GM12878 (cell line): ENCODE measurements at regions of chr4 and their contacts with region 1.

Region 1: DNA sequence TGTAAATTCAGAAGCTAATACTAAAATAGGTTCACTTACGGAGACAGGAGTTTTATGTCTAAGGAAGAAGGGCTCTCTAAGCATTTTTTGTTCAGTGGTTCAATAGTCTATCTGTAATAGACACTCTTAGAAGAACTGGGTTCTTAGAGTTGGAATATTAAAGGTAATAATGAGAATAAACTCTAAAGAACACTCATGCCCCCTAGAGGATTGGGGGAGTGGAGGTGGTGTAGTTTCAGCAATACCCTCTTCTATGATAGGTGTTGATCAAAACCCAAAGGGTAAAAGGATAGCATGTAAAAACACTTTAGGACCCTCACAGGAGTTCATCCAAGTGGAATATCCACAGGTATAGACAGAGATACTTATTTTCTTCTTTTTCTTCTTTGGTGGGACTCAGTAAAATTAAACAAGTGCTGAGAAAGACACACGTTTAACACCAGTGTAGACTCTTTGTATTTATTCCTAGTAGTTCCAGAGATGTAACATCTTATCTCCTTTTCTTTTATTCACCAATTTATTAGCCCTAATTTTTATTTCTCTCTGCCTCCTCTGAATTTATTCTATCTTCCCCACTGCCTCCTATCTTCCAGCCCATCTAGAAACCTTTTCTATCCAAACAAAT is 25.7 kb upstream of the MND1 start:
- DNase-seq: no peak
- ATAC-seq: peak; percentile 88
- H3K4me3 ChIP-seq: no peak overlapping the region
- H3K27ac ChIP-seq: no peak overlapping the region
- H3K4me1 ChIP-seq: no peaks in the 10 kb centered on the region
- H3K27me3 ChIP-seq: no peaks in the 10 kb centered on the region
- CTCF ChIP-seq: peak; percentile 62 to 68 (median 66)
- EP300 ChIP-seq: no peak
- POLR2A ChIP-seq: no peak
- RAD21 ChIP-seq: peak; percentile 78

Region 2: DNA sequence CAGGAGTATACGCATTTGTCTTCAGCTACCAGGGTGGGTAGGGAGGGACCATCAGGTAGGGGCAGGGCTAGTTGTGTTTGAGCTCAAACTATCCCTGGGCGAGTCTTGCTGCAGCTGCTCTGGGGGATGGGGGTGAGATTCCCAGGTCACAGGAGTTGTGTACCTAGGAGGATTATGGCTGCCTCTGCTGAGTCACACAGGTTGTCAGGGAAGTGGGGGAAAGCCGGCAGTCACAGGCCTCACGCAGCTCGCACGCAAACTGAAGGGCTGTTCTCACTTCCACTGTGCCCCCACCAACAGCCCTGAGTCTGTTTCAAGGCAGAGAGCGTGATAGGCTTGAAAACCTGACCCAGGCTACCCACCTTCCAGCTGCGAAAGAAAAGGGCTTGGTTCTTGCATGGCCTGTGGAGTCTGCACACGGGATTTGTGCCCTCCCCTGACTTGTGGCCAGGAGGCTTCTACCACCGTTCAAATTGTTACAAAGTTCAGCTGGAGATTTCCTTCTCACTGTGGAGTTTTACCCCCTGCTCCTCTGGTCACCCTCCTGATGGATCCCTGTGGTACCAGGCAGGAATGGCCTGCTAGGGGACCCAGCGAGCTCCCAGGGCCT is 475.2 kb before region 1 on chr4:
- CTCF ChIA-PET with region 1: no interaction called
- POLR2A ChIA-PET with region 1: no interaction called
- RAD21 ChIA-PET with region 1: no interaction called
- SMC1A ChIA-PET with region 1: no interaction called
- in situ Hi-C with region 1: no loop called
- intact Hi-C with region 1: loop called (anchors 10 kb)
- DNase-seq: no peak
- ATAC-seq: no peak
- H3K4me3 ChIP-seq: no peak overlapping the region
- H3K27ac ChIP-seq: no peak overlapping the region
- H3K4me1 ChIP-seq: no peaks in the 10 kb centered on the region
- H3K27me3 ChIP-seq: no peaks in the 10 kb centered on the region
- CTCF ChIP-seq: no peak
- EP300 ChIP-seq: no peak
- POLR2A ChIP-seq: no peak
- RAD21 ChIP-seq: no peak

Region 3: GRCh38 chr4:153232768-153233167 is 86.0 kb before region 1 on chr4:
- CTCF ChIA-PET with region 1: interaction called, 3 read pairs
- POLR2A ChIA-PET with region 1: no interaction called
- RAD21 ChIA-PET with region 1: no interaction called
- SMC1A ChIA-PET with region 1: no interaction called
- in situ Hi-C with region 1: no loop called
- intact Hi-C with region 1: loop called (anchors 5 kb)
- DNase-seq: no peak
- ATAC-seq: peak; percentile 79
- H3K4me3 ChIP-seq: no peak overlapping the region
- H3K27ac ChIP-seq: no peak overlapping the region
- H3K4me1 ChIP-seq: no peaks in the 10 kb centered on the region
- H3K27me3 ChIP-seq: peaks cover 0 to under 1% of the 10 kb centered on the region in 2 experiments; a peak in 2 of 4 replicates
- CTCF ChIP-seq: peak; percentile 22 to 37 (median 34); a peak in 4 of 6 replicates
- EP300 ChIP-seq: no peak
- POLR2A ChIP-seq: no peak
- RAD21 ChIP-seq: peak; percentile 30; the same call in 1 of the 2 replicates

Region 4: DNA sequence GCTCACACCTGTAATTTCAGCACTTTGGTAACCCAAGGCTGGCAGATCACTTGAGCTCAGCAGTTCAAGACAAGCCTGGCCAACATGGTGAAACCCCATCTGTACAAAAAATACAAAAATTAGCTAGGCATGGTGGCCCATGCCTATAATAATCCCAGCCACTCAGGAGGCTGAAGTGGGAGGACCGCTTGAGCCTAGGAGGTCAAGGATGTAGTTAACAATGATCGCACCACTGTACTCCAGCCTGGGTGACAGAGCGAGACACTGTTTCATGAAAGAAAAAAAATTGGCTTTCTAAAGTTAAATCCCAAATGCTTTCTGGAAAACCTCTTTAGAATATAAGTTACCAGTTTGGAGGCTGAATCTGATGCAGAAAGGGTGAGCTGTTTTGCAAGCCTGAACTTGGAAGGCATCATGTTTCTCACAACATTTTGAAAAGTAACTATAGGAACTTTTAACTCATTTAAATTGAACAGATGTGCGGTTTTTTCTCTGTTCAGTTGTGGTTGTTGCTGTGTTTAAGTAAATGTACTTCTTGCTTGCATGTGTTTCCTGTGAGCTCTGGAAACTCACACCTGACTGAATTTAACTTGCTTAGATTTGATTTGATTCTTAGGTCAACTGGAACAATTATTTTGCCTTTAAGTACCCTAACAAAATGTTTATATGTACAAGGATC is 107.5 kb after region 1 on chr4:
- CTCF ChIA-PET with region 1: no interaction called
- POLR2A ChIA-PET with region 1: no interaction called
- RAD21 ChIA-PET with region 1: no interaction called
- SMC1A ChIA-PET with region 1: no interaction called
- in situ Hi-C with region 1: no loop called
- intact Hi-C with region 1: no loop called
- DNase-seq: no peak
- ATAC-seq: peak; percentile 58
- H3K4me3 ChIP-seq: no peak overlapping the region
- H3K27ac ChIP-seq: 0 out of 2 replicates have a peak overlapping the region, but pooled peaks have one; percentile 4
- H3K4me1 ChIP-seq: peaks cover 20% of the 10 kb centered on the region
- H3K27me3 ChIP-seq: no peaks in the 10 kb centered on the region
- CTCF ChIP-seq: no peak
- EP300 ChIP-seq: no peak
- POLR2A ChIP-seq: no peak
- RAD21 ChIP-seq: no peak

Region 5: GRCh38 chr4:153438916-153439756 is 120.3 kb after region 1 on chr4:
- CTCF ChIA-PET with region 1: no interaction called
- POLR2A ChIA-PET with region 1: no interaction called
- RAD21 ChIA-PET with region 1: no interaction called
- SMC1A ChIA-PET with region 1: no interaction called
- in situ Hi-C with region 1: no loop called
- intact Hi-C with region 1: no loop called
- DNase-seq: peak; percentile 79
- ATAC-seq: peak; percentile 76
- H3K4me3 ChIP-seq: peak overlapping the region; percentile 65
- H3K27ac ChIP-seq: peak overlapping the region; percentile 80
- H3K4me1 ChIP-seq: peaks cover 38% of the 10 kb centered on the region
- H3K27me3 ChIP-seq: no peaks in the 10 kb centered on the region
- CTCF ChIP-seq: 0 out of 6 replicates have a peak, but pooled peaks of 1 of the 3 experiments have one; percentile 4
- EP300 ChIP-seq: no peak
- POLR2A ChIP-seq: no peak
- RAD21 ChIP-seq: no peak

Region 6: DNA sequence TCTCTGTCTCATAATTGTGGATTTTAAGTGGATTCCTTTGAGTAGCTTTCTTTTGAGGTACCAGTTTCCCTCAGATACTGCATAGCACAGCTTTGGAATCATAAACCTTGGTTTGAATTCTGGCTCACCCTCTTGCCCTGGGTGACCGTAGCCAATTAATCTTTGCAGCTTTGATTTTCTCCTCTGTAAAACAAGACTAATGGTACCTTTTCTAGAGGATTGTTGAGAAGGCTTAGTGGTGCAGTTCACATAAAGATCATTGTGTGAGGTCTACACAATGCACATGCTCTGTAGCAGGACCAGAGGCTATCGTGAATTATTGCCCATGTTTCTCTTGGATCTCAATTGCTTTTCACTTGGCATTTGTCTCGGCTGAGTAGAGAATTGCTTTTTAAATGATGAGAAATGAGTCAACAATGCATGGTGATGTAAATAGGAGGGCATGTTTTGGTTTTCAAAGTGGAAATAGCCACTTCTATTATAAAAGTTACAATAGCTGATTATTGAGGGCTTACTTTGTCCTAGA is 195.3 kb after region 1 on chr4:
- CTCF ChIA-PET with region 1: no interaction called
- POLR2A ChIA-PET with region 1: no interaction called
- RAD21 ChIA-PET with region 1: no interaction called
- SMC1A ChIA-PET with region 1: no interaction called
- in situ Hi-C with region 1: no loop called
- intact Hi-C with region 1: no loop called
- DNase-seq: no peak
- ATAC-seq: peak; percentile 40
- H3K4me3 ChIP-seq: no peak overlapping the region
- H3K27ac ChIP-seq: peak overlapping the region; percentile 15; the same call in 1 of the 2 replicates
- H3K4me1 ChIP-seq: peaks cover 30% of the 10 kb centered on the region
- H3K27me3 ChIP-seq: no peaks in the 10 kb centered on the region
- CTCF ChIP-seq: no peak
- EP300 ChIP-seq: no peak
- POLR2A ChIP-seq: no peak
- RAD21 ChIP-seq: no peak